ENCODE measurements at regions of chr1 and their contacts with region 1.

Region 1: DNA sequence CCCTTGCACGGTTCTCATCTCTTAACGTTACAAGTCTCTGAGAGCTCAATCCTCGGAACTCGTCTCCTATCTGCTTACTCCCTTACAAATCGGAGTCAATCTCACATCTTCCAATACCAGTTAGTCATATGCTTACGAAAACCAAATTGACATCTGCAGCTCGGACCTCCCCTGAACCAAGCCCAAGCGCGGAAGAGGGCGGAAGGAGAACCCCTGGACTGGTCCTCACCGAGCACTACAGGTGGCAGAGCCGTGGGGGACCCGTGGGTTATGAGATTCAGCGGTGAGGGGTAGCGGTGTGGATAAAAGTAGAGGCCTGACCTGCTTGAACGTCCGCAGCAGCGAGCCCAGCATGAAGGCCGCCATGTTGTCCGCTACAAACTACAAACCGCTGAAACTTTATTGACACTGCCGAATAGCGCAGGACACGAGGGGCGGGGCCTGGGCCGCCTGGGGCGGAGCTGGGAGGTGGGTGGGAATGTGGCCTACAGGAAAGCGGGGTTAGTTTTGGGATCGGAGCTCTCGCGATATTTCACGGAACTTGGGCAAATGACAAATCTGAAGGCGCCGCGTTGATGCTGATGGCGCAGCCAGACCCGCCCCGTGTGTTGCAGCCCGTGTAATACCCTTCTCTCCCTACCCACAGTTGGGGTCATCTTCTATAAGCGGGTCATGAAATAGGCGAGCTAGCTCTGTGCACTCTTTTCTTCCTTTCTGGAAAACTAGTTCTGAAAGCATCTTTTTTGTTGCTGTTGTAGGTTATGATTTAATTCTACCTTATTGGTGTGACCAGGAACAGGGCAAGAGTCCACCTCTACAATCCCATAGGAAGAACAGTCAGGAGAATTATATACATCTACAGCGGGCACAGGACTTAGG is at the start of gene MRPS14:
- DNase-seq: peak; percentile 95 to 98 (median 97)
- H3K4me3 ChIP-seq: peak within 1 kb of the TSS; percentile 79 to 97
- H3K4me3 Mint-ChIP-seq: peak within 1 kb of the TSS; percentile 90 to 98 (median 93)
- H3K27ac ChIP-seq: peak within 1 kb of the TSS; percentile 94
- H3K27ac Mint-ChIP-seq: peak within 1 kb of the TSS; percentile 86 to 97 (median 97)
- H3K4me1 ChIP-seq: peaks cover 25% of the 10 kb centered on the region
- H3K4me1 Mint-ChIP-seq: peaks cover 24 to 43% (median 28%) of the 10 kb centered on the region in 4 donors
- H3K27me3 ChIP-seq: no peaks in the 10 kb centered on the region
- H3K27me3 Mint-ChIP-seq: no peaks in the 10 kb centered on the region
- total RNA-seq, gene MRPS14: 39.3 to 40.6 TPM

Region 2: GRCh38 chr1:175005085-175005783 is 18.0 kb before region 1 on chr1:
- CTCF ChIA-PET with region 1: interaction called, 8 read pairs
- POLR2A ChIA-PET with region 1: interaction called, 248 read pairs
- intact Hi-C with region 1: no loop called
- DNase-seq: no peak
- H3K4me3 ChIP-seq: no peak overlapping the region
- H3K4me3 Mint-ChIP-seq: peak overlapping the region in 1 of 8 donors; percentile 5
- H3K27ac ChIP-seq: no peak overlapping the region
- H3K27ac Mint-ChIP-seq: peak overlapping the region in 6 of 7 donors; percentile 1 to 85 (median 34)
- H3K4me1 ChIP-seq: peaks cover 41% of the 10 kb centered on the region
- H3K4me1 Mint-ChIP-seq: peaks cover 41 to 55% (median 46%) of the 10 kb centered on the region in 4 donors
- H3K27me3 ChIP-seq: no peaks in the 10 kb centered on the region
- H3K27me3 Mint-ChIP-seq: no peaks in the 10 kb centered on the region

Region 3: GRCh38 chr1:175062858-175063257 is 39.6 kb after region 1 on chr1:
- CTCF ChIA-PET with region 1: no interaction called
- POLR2A ChIA-PET with region 1: no interaction called
- intact Hi-C with region 1: no loop called
- DNase-seq: no peak
- H3K4me3 ChIP-seq: no peak overlapping the region
- H3K4me3 Mint-ChIP-seq: no peak overlapping the region
- H3K27ac ChIP-seq: no peak overlapping the region
- H3K27ac Mint-ChIP-seq: no peak overlapping the region
- H3K4me1 ChIP-seq: no peaks in the 10 kb centered on the region
- H3K4me1 Mint-ChIP-seq: no peaks in the 10 kb centered on the region
- H3K27me3 ChIP-seq: no peaks in the 10 kb centered on the region
- H3K27me3 Mint-ChIP-seq: peaks cover 5 to 8% of the 10 kb centered on the region in 2 donors